Adrenal gland (tissue), 19 donors: ENCODE measurements at regions of chr1 and their contacts with region 1.

Region 1: GRCh38 chr1:196148367-196148970 is 459.8 kb downstream of the KCNT2 start:
- DNase-seq: no peak
- H3K4me3 ChIP-seq: no peak overlapping the region
- H3K27ac ChIP-seq: no peak overlapping the region
- H3K4me1 ChIP-seq: no peaks in the 10 kb centered on the region
- H3K27me3 ChIP-seq: no peaks in the 10 kb centered on the region
- CTCF ChIP-seq: peak; percentile 25 to 69 (median 56)
- POLR2A ChIP-seq: no peak

Region 2: GRCh38 chr1:195979646-195980045 is 168.8 kb before region 1 on chr1:
- intact Hi-C with region 1: no loop called
- DNase-seq: no peak
- H3K4me3 ChIP-seq: no peak overlapping the region
- H3K27ac ChIP-seq: no peak overlapping the region
- H3K4me1 ChIP-seq: no peaks in the 10 kb centered on the region
- H3K27me3 ChIP-seq: no peaks in the 10 kb centered on the region
- CTCF ChIP-seq: no peak
- POLR2A ChIP-seq: no peak

Region 3: GRCh38 chr1:196271212-196271947 is 122.9 kb after region 1 on chr1:
- intact Hi-C with region 1: no loop called
- DNase-seq: no peak
- H3K4me3 ChIP-seq: no peak overlapping the region
- H3K27ac ChIP-seq: no peak overlapping the region
- H3K4me1 ChIP-seq: no peaks in the 10 kb centered on the region
- H3K27me3 ChIP-seq: no peaks in the 10 kb centered on the region
- CTCF ChIP-seq: no peak
- POLR2A ChIP-seq: no peak

Region 4: DNA sequence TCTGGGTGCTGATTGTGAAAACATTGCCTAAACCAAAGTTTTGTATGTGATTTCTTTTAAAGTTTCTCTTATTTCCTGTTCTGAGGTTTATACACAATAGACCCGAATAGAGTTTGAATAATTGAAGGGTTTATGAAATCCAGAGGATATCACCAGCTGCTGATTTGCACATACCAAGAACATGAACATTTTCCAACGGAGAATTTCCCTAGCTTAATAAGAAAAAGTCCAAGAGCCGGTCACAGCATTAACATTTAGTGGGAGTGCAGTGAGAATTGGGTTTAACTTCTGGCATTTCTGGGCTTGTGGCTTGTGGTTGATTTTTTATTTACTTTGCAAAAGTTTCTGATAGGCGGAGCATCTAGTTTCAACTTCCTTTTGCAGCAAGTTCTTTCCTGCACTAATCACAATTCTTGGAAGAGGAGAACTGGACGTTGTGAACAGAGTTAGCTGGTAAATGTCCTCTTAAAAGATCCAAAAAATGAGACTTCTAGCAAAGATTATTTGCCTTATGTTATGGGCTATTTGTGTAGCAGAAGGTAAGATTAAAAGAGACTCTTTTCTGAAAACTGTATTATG is 503.3 kb after region 1 on chr1 and contains the start of gene CFH:
- intact Hi-C with region 1: loop called in 1 of 2 experiments (anchors 10 kb)
- DNase-seq: no peak
- H3K4me3 ChIP-seq: peak within 1 kb of the TSS in 1 of 4 donors; percentile 44
- H3K27ac ChIP-seq: no peak within 1 kb of the TSS
- H3K4me1 ChIP-seq: no peaks in the 10 kb centered on the region
- H3K27me3 ChIP-seq: no peaks in the 10 kb centered on the region
- CTCF ChIP-seq: no peak
- POLR2A ChIP-seq: peak in 1 of 2 donors; percentile 24
- total RNA-seq, gene CFH: 39.7 to 151 (median 79.3) TPM

Region 5: GRCh38 chr1:196660852-196661251 is 512.4 kb after region 1 on chr1:
- intact Hi-C with region 1: loop called (anchors 5 to 10 kb)
- DNase-seq: peak in 1 of 7 donors; percentile 16
- H3K4me3 ChIP-seq: peak overlapping the region in 1 of 4 donors; percentile 17
- H3K27ac ChIP-seq: no peak overlapping the region
- H3K4me1 ChIP-seq: no peaks in the 10 kb centered on the region
- H3K27me3 ChIP-seq: no peaks in the 10 kb centered on the region
- CTCF ChIP-seq: peak; percentile 29 to 78 (median 64)
- POLR2A ChIP-seq: no peak